Tibial artery (tissue), 4 donors: ENCODE measurements at regions of chr13 and their contacts with region 1.

Region 1: GRCh38 chr13:111228262-111229144 is 91.9 kb upstream of the TEX29 start:
- DNase-seq: peak in 1 of 2 donors; percentile 88
- H3K4me3 ChIP-seq: peak overlapping the region in 1 of 2 donors; percentile 9
- H3K27ac ChIP-seq: peak overlapping the region; percentile 62 to 64
- H3K4me1 ChIP-seq: peaks cover 0 to 94% (median 23%) of the 10 kb centered on the region in 4 donors
- H3K27me3 ChIP-seq: no peaks in the 10 kb centered on the region
- CTCF ChIP-seq: no peak

Region 2: GRCh38 chr13:111270765-111271698 is 42.5 kb after region 1 on chr13:
- intact Hi-C with region 1: loop called (anchors 10 kb)
- DNase-seq: no peak
- H3K4me3 ChIP-seq: no peak overlapping the region
- H3K27ac ChIP-seq: peak overlapping the region; percentile 8 to 56
- H3K4me1 ChIP-seq: peaks cover 0 to 35% (median 27%) of the 10 kb centered on the region in 4 donors
- H3K27me3 ChIP-seq: no peaks in the 10 kb centered on the region
- CTCF ChIP-seq: no peak

Region 3: GRCh38 chr13:112489199-112489598 is 1260.7 kb after region 1 on chr13:
- intact Hi-C with region 1: no loop called
- DNase-seq: no peak
- H3K4me3 ChIP-seq: no peak overlapping the region
- H3K27ac ChIP-seq: no peak overlapping the region
- H3K4me1 ChIP-seq: no peaks in the 10 kb centered on the region
- H3K27me3 ChIP-seq: no peaks in the 10 kb centered on the region
- CTCF ChIP-seq: no peak